ENCODE measurements at regions of chr21 and their contacts with region 1.

Region 1: GRCh38 chr21:33259995-33260394 is 6.2 kb upstream of the IL10RB start:
- DNase-seq: no peak
- H3K4me3 Mint-ChIP-seq: no peak overlapping the region
- H3K27ac Mint-ChIP-seq: no peak overlapping the region
- H3K4me1 Mint-ChIP-seq: peaks cover 57% of the 10 kb centered on the region
- H3K27me3 Mint-ChIP-seq: no peaks in the 10 kb centered on the region

Region 2: DNA sequence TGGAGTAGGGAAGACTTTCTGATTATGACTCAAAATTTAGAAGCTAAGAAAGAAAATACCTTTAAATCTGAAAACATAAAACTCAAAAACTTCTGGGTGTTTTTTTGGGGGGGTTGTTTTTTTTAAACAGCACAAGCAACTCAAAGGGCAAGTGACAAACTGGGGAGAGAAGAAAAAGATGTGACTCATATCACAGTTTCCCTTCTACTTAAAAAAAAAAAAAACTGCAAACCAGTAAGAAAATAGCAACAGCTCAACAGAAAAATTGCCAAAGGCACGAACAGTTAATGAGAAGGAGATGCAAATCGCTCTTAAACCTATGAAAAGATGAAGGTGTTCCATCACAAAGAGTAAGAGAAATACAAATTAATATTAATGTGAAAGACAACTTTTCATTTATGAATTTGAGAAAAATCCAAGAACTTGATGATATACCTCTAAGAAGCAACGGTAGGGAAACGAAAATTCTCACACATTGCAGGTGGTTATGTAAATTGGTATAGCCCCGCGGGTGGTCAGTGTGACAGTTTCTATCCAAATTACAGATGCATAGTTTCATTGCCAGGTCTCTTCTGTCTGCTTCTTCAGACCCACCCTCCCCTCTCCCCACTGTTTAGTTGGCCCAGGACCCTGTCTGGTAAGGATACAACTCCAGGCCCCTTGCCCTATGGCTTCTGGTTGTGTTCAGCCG is 21.3 kb before region 1 on chr21:
- CTCF ChIA-PET with region 1: interaction called, 4 read pairs
- intact Hi-C with region 1: loop called (anchors 1 kb)
- DNase-seq: no peak
- H3K4me3 Mint-ChIP-seq: peak overlapping the region; percentile 3
- H3K27ac Mint-ChIP-seq: peak overlapping the region; percentile 76
- H3K4me1 Mint-ChIP-seq: peaks cover 80% of the 10 kb centered on the region
- H3K27me3 Mint-ChIP-seq: no peaks in the 10 kb centered on the region

Region 3: GRCh38 chr21:33244082-33244778 is 15.8 kb before region 1 on chr21:
- CTCF ChIA-PET with region 1: no interaction called
- intact Hi-C with region 1: loop called (anchors 1 kb)
- DNase-seq: no peak
- H3K4me3 Mint-ChIP-seq: peak overlapping the region; percentile 62
- H3K27ac Mint-ChIP-seq: peak overlapping the region; percentile 90
- H3K4me1 Mint-ChIP-seq: peaks cover 86% of the 10 kb centered on the region
- H3K27me3 Mint-ChIP-seq: no peaks in the 10 kb centered on the region

Region 4: GRCh38 chr21:33332143-33332542 is 72.1 kb after region 1 on chr21:
- CTCF ChIA-PET with region 1: no interaction called
- intact Hi-C with region 1: no loop called
- DNase-seq: peak; percentile 23
- H3K4me3 Mint-ChIP-seq: no peak overlapping the region
- H3K27ac Mint-ChIP-seq: peak overlapping the region; percentile 32
- H3K4me1 Mint-ChIP-seq: peaks cover 66% of the 10 kb centered on the region
- H3K27me3 Mint-ChIP-seq: no peaks in the 10 kb centered on the region

Region 5: DNA sequence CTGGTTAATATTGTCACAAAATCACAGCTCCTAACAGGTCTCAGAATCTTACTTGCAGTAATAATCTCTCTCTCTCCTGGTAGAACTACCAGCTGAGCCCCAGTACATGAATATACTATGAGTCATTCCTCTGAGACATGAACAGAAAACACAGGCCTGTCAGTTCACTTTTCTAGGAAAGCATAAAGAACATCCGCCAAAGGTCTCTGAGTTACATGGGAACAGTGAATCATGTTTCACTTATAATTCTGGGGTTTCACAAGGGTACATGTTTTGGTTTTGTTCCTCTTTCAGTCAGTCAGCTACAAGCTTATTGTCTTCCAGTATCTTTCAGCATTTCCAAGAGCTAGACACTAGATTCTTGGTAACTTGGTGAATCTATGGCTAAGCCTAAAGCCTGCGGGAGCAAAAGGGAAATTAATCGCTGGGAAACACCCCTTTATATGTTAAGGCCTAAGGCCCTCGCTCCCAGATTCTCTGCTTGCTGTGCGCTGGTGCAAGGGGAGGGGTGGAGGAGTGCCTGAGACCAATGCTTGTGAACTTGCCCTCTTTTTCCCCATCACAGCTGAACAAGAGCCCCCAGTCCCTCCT is 174.9 kb after region 1 on chr21:
- CTCF ChIA-PET with region 1: no interaction called
- intact Hi-C with region 1: loop called (anchors 1 kb)
- DNase-seq: peak; percentile 43
- H3K4me3 Mint-ChIP-seq: peak overlapping the region; percentile 25
- H3K27ac Mint-ChIP-seq: peak overlapping the region; percentile 76
- H3K4me1 Mint-ChIP-seq: peaks cover 29% of the 10 kb centered on the region
- H3K27me3 Mint-ChIP-seq: no peaks in the 10 kb centered on the region

Measured in activated naive CD4-positive, alpha-beta T cell treated with anti-CD3 and anti-CD28 coated beads for 36 hours (primary cell).